Activated CD4-positive, alpha-beta memory T cell treated with anti-CD3 and anti-CD28 coated beads for 36 hours (primary cell): ENCODE measurements at regions of chr5 and their contacts with region 1.

Region 1: GRCh38 chr5:55711968-55712859 is at the start of gene SLC38A9:
- DNase-seq: peak; percentile 96
- H3K4me3 Mint-ChIP-seq: peak within 1 kb of the TSS; percentile 96
- H3K27ac Mint-ChIP-seq: peak within 1 kb of the TSS; percentile 80
- H3K4me1 Mint-ChIP-seq: peaks cover 33% of the 10 kb centered on the region
- H3K27me3 Mint-ChIP-seq: no peaks in the 10 kb centered on the region
- total RNA-seq, gene SLC38A9: 14.2 to 15.0 TPM

Region 2: DNA sequence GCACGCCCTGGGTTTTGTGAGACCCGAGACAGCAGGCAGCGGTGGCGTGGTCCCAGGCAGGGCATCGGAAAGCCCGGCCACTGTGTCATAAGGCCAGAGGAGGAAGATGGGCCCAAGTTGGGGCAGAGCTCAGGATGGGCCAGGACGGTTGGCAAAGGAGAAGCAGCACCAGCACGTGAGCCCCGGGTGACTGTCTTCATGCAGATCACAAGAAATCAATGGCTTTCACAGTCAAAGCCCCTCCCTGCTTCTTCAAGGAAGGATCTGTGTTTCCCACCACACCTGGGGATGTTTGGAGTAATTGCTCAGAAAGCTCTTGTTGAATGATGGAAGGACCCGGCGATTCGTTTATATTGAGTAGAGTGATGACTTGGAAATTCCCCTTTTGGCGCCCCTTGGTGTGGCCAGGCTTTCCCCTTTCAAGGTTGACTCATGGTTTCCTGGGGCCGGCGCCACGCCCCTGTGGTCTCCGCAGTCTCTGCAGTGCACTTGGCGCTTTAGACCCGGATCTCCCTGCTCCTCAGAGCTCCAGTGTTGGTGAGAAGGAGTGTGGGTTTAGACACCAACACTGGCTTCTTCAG is 191.0 kb after region 1 on chr5:
- CTCF ChIA-PET with region 1: no interaction called
- POLR2A ChIA-PET with region 1: no interaction called
- intact Hi-C with region 1: loop called (anchors 5 kb)
- DNase-seq: peak; percentile 89
- H3K4me3 Mint-ChIP-seq: peak overlapping the region; percentile 24
- H3K27ac Mint-ChIP-seq: no peak overlapping the region
- H3K4me1 Mint-ChIP-seq: peaks cover 35% of the 10 kb centered on the region
- H3K27me3 Mint-ChIP-seq: peaks cover 2% of the 10 kb centered on the region

Region 3: GRCh38 chr5:55923177-55923771 is 211.1 kb after region 1 on chr5:
- CTCF ChIA-PET with region 1: no interaction called
- POLR2A ChIA-PET with region 1: no interaction called
- intact Hi-C with region 1: loop called (anchors 5 kb)
- DNase-seq: peak; percentile 34
- H3K4me3 Mint-ChIP-seq: peak overlapping the region; percentile 77
- H3K27ac Mint-ChIP-seq: no peak overlapping the region
- H3K4me1 Mint-ChIP-seq: peaks cover 23% of the 10 kb centered on the region
- H3K27me3 Mint-ChIP-seq: no peaks in the 10 kb centered on the region

Region 4: GRCh38 chr5:57137401-57137800 is 1425.2 kb after region 1 on chr5:
- CTCF ChIA-PET with region 1: no interaction called
- POLR2A ChIA-PET with region 1: no interaction called
- intact Hi-C with region 1: no loop called
- DNase-seq: no peak
- H3K4me3 Mint-ChIP-seq: no peak overlapping the region
- H3K27ac Mint-ChIP-seq: no peak overlapping the region
- H3K4me1 Mint-ChIP-seq: no peaks in the 10 kb centered on the region
- H3K27me3 Mint-ChIP-seq: no peaks in the 10 kb centered on the region